Aorta (tissue), 5 donors: ENCODE measurements at regions of chr4 and their contacts with region 1.

Region 1: GRCh38 chr4:110631584-110632505 is 9.0 kb upstream of the PITX2 start:
- DNase-seq: peak; percentile 69 to 84
- ATAC-seq: peak; percentile 72
- H3K4me3 ChIP-seq: no peak overlapping the region
- H3K27ac ChIP-seq: no peak overlapping the region
- H3K4me1 ChIP-seq: no peaks in the 10 kb centered on the region
- H3K27me3 ChIP-seq: no peaks in the 10 kb centered on the region

Region 2: DNA sequence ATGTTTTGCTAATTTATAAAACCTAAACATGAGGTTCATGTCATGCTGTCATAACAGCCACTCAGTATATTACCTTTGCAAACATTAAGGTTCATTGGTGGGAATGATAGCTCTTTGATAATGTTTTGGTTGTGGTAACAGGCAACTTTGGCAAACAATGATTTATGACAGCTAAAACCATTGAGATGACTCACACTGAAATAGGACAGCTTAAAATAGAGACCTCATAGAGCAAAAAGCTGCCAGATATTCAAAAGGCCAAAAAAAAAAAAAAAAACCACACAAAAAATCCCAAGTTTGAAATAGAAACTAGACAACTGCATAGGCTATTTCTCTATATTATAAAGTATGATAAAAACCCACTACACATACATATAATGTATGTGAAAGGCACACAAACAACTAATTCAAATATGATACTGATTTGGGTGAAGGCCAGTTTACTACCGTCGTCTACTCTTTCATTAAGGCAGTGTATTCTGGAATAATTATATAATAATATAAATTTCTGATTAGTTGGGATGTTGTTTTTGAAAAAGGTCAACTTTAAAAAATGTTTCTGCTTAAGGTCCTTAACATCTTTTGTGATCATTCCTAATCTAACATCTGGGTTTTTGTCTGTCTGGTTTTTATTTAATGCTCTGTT is 637.0 kb after region 1 on chr4:
- intact Hi-C with region 1: no loop called
- DNase-seq: no peak
- ATAC-seq: no peak
- H3K4me3 ChIP-seq: peak overlapping the region in 1 of 2 donors; percentile 34
- H3K27ac ChIP-seq: no peak overlapping the region
- H3K4me1 ChIP-seq: peaks cover 2 to 7% of the 10 kb centered on the region in 2 donors
- H3K27me3 ChIP-seq: no peaks in the 10 kb centered on the region

Region 3: GRCh38 chr4:111283061-111283677 is 651.3 kb after region 1 on chr4:
- intact Hi-C with region 1: loop called in 1 of 2 experiments (anchors 5 kb)
- DNase-seq: peak; percentile 49 to 78
- ATAC-seq: no peak
- H3K4me3 ChIP-seq: no peak overlapping the region
- H3K27ac ChIP-seq: no peak overlapping the region
- H3K4me1 ChIP-seq: no peaks in the 10 kb centered on the region
- H3K27me3 ChIP-seq: no peaks in the 10 kb centered on the region

Region 4: DNA sequence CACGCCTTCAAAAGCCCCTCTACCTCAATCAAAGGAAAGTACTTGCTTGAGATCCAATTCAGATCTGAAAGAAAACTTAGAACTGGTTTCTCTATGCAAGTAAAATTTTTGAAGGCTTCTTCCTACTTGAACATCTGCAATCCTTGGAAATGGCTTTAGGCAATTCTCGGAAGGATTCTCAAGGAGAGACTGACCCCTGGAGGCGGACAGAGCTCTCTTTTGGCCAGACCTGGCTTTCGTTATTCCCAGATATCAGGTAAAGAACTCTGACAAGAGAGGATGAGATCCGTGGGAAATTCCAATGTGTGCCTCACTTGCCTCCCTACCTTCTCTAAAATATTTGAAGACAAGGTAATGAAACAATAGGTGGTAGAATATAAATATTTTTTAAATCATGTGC is 843.2 kb after region 1 on chr4:
- intact Hi-C with region 1: loop called in 1 of 2 experiments (anchors 10 kb)
- DNase-seq: no peak
- ATAC-seq: no peak
- H3K4me3 ChIP-seq: no peak overlapping the region
- H3K27ac ChIP-seq: no peak overlapping the region
- H3K4me1 ChIP-seq: no peaks in the 10 kb centered on the region
- H3K27me3 ChIP-seq: no peaks in the 10 kb centered on the region

Region 5: GRCh38 chr4:111631215-111631999 is 999.6 kb after region 1 on chr4:
- intact Hi-C with region 1: loop called in 1 of 2 experiments (anchors 10 kb)
- DNase-seq: no peak
- ATAC-seq: no peak
- H3K4me3 ChIP-seq: no peak overlapping the region
- H3K27ac ChIP-seq: no peak overlapping the region
- H3K4me1 ChIP-seq: no peaks in the 10 kb centered on the region
- H3K27me3 ChIP-seq: no peaks in the 10 kb centered on the region